Transverse colon (tissue), 4 donors: ENCODE measurements at regions of chr2 and their contacts with region 1.

Region 1: DNA sequence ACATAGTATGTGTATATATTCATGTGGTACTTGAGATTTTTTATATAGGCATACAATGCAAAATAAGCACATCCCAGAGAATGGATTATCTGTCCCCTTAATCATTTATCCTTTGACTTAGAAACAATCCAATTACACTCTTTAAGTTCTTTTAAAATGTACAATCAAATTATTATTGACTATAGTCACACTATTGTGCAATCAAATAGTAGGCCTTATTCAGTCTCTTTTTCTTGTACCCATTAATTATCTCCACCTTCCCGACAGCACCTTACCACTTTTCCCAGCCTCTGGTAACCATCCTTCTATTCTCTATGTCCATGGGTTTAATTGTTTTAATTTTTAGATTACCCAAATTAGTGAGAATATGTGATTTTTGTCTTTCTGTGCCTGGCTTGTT is 914.1 kb downstream of the CCDC85A start:
- DNase-seq: no peak
- H3K4me3 ChIP-seq: no peak overlapping the region
- H3K27ac ChIP-seq: no peak overlapping the region
- H3K4me1 ChIP-seq: no peaks in the 10 kb centered on the region
- H3K27me3 ChIP-seq: no peaks in the 10 kb centered on the region
- CTCF ChIP-seq: no peak
- EP300 ChIP-seq: no peak
- POLR2A ChIP-seq: no peak

Region 2: GRCh38 chr2:57080035-57080434 is 17.8 kb before region 1 on chr2:
- in situ Hi-C with region 1: no loop called
- intact Hi-C with region 1: loop called (anchors 1 kb)
- DNase-seq: no peak
- H3K4me3 ChIP-seq: no peak overlapping the region
- H3K27ac ChIP-seq: no peak overlapping the region
- H3K4me1 ChIP-seq: no peaks in the 10 kb centered on the region
- H3K27me3 ChIP-seq: no peaks in the 10 kb centered on the region
- CTCF ChIP-seq: no peak
- EP300 ChIP-seq: no peak
- POLR2A ChIP-seq: no peak